HEK293T (cell line): ENCODE measurements at regions of chr11 and their contacts with region 1.

Region 1: GRCh38 chr11:14643697-14644225 is at the start of gene PDE3B:
- DNase-seq: peak; percentile 88

Region 2: GRCh38 chr11:14668731-14669301 is 25.1 kb after region 1 on chr11:
- CTCF ChIA-PET with region 1: no interaction called
- POLR2A ChIA-PET with region 1: no interaction called
- DNase-seq: no peak

Region 3: GRCh38 chr11:14892036-14892567 is 248.3 kb after region 1 on chr11 and contains the start of gene CYP2R1:
- CTCF ChIA-PET with region 1: no interaction called
- POLR2A ChIA-PET with region 1: interaction called, 12 read pairs
- DNase-seq: peak; percentile 94